Left ventricle myocardium superior (tissue), 1 donor: ENCODE measurements at regions of chr6 and their contacts with region 1.

Region 1: GRCh38 chr6:70667711-70668498 is at the start of gene SMAP1:
- DNase-seq: peak; percentile 98
- ATAC-seq: peak; percentile 98
- total RNA-seq, gene SMAP1: 32.2 TPM

Region 2: DNA sequence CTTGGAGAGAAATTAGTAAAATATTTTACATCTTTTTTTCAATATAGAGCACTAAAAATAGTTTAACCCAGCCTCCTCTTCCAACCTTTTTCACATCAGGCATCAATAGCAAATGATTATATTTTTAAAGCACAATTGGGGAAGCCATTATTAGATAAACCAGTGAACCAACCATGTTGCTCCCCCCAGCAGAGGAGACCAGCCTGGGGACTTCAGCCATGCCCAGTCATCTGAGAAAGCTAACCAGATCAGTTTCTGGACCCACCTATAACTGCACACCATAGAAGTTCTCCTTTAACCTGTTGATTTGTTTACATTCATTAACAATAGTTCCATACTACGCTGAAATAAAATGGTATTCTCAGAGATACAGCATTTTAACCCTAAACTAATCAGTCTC is 114.9 kb before region 1 on chr6:
- intact Hi-C with region 1: no loop called
- DNase-seq: no peak
- ATAC-seq: peak; percentile 39

Region 3: DNA sequence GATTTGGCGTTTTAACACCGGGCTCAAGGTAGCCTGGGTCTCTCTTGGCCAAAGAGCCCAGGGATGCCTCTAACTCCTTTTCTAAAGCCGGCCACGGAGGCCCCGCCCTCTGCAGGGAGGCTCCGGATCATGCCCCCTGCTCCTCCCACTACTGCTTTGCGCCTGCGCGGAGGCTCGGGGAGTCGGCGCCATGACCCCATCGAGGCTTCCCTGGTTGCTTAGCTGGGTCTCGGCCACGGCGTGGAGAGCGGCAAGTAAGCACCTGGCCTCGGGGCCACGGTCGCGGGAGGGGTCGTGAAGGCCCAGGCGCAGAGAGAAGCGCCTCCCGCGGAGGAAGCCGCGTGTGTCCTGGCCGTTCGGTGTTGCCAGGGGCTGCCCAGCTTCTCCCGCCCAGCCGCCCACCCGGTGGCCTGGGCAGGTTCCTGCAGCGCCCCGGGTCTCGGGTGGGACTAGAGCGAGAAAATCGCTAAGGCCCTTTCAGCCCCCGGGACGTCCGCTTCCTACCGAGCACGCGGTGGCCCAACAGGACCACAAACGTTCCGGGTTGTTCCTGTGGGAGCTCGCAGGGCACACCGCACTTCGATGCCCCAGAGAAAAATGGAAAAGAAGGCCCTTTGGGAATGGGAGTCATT is 101.0 kb before region 1 on chr6 and contains the start of gene SDHAF4:
- intact Hi-C with region 1: loop called (anchors 10 kb)
- DNase-seq: peak; percentile 97
- ATAC-seq: peak; percentile 100
- total RNA-seq, gene SDHAF4: 17.0 TPM